ENCODE measurements at regions of chr12 and their contacts with region 1.

Region 1: GRCh38 chr12:104064031-104064822 is at the start of gene HCFC2:
- DNase-seq: peak; percentile 24
- ATAC-seq: peak; percentile 97
- H3K4me3 ChIP-seq: peak within 1 kb of the TSS; percentile 93 to 94
- H3K27ac ChIP-seq: peak within 1 kb of the TSS; percentile 87
- H3K4me1 ChIP-seq: peaks cover 26% of the 10 kb centered on the region
- H3K27me3 ChIP-seq: no peaks in the 10 kb centered on the region
- CTCF ChIP-seq: no peak
- total RNA-seq, gene HCFC2: 8.5 TPM

Region 2: GRCh38 chr12:103986829-103987228 is 77.4 kb before region 1 on chr12:
- CTCF ChIA-PET with region 1: no interaction called
- POLR2A ChIA-PET with region 1: interaction called, 14 read pairs
- in situ Hi-C with region 1: no loop called
- intact Hi-C with region 1: no loop called
- DNase-seq: no peak
- ATAC-seq: no peak
- H3K4me3 ChIP-seq: no peak overlapping the region
- H3K27ac ChIP-seq: no peak overlapping the region
- H3K4me1 ChIP-seq: no peaks in the 10 kb centered on the region
- H3K27me3 ChIP-seq: no peaks in the 10 kb centered on the region
- CTCF ChIP-seq: no peak

Region 3: GRCh38 chr12:104094284-104094683 is 30.1 kb after region 1 on chr12:
- CTCF ChIA-PET with region 1: no interaction called
- POLR2A ChIA-PET with region 1: interaction called, 19 read pairs
- in situ Hi-C with region 1: no loop called
- intact Hi-C with region 1: no loop called
- DNase-seq: no peak
- ATAC-seq: no peak
- H3K4me3 ChIP-seq: no peak overlapping the region
- H3K27ac ChIP-seq: no peak overlapping the region
- H3K4me1 ChIP-seq: no peaks in the 10 kb centered on the region
- H3K27me3 ChIP-seq: no peaks in the 10 kb centered on the region
- CTCF ChIP-seq: no peak

Region 4: GRCh38 chr12:104147346-104147745 is 83.1 kb after region 1 on chr12:
- CTCF ChIA-PET with region 1: no interaction called
- POLR2A ChIA-PET with region 1: no interaction called
- in situ Hi-C with region 1: no loop called
- intact Hi-C with region 1: no loop called
- DNase-seq: no peak
- ATAC-seq: no peak
- H3K4me3 ChIP-seq: no peak overlapping the region
- H3K27ac ChIP-seq: no peak overlapping the region
- H3K4me1 ChIP-seq: no peaks in the 10 kb centered on the region
- H3K27me3 ChIP-seq: no peaks in the 10 kb centered on the region; the same call in 1 of the 2 replicates
- CTCF ChIP-seq: no peak